ENCODE measurements at regions of chr6 and their contacts with region 1.

Region 1: DNA sequence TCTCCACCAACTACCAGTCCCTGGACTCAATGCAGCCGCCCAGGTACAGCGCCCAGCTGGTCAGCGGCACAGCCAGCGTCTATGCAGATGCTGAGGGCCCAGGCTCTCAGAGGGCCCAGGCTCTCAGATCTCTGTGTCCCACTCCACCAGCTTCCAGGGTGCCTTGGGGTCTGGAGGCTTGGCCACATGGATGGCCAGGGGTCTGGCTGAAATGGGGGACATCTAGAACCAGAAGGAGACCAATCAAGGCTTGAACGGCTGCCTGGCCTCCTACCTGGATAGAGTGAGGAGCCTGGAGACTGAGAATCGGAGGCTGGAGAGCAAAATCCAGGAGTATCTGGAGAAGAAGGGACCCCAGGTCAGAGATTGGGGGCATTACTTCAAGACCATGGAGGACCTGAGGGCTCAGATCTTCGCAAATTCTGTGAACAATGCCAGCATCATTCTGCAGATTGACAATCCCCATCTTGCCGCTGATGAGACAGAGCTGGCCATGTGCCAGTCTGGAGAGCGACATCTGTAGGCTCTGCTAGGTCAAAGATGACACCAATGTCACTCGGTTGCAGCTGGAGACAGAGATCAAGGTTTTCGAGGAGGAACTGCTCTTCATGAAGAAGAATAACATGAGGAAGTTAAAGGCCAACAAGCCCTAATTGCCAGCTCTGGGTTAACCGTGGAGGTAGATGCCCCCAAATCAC is 44.1 kb upstream of the GRM4 start:
- DNase-seq: peak in 2 of 5 donors; percentile 5 to 49
- H3K4me3 ChIP-seq: no peak overlapping the region
- H3K4me3 Mint-ChIP-seq: no peak overlapping the region
- H3K27ac ChIP-seq: no peak overlapping the region
- H3K27ac Mint-ChIP-seq: no peak overlapping the region
- H3K4me1 ChIP-seq: peaks cover 9% of the 10 kb centered on the region
- H3K4me1 Mint-ChIP-seq: peaks cover 0 to 4% (median 0%) of the 10 kb centered on the region in 3 donors
- H3K27me3 ChIP-seq: no peaks in the 10 kb centered on the region
- H3K27me3 Mint-ChIP-seq: no peaks in the 10 kb centered on the region

Region 2: DNA sequence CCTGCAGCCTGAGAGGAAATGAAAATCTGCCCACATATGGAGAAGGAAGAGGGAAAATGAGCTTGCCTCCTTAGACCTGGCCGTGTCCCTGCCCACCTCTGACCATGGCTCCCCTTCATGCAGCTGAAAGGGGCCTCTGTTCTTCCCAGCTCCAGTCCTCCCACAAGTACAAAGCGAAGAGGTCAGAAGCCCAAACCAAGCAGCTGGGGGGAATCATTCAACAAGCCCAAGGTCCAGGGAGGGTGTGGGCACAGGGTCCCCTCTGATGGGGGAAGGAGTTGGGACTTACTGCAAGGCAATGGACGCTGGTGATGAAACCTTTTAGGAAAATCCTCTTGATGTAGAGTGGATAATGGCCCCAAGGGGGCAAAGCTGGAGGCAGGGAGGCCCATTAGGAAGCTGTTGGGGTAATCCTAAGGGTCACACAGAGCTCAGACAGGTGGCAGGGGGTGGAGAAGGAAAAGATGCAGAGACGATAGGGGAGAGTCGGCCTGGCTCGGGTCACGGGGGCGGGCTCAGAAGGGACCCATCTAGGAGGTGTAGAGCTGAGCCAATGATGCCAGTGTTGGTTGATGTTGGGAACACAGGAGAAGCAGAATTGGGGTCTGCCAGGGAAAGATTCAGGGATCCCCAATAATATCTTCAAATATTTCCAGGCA is 28.0 kb before region 1 on chr6:
- CTCF ChIA-PET with region 1: interaction called, 22 read pairs
- POLR2A ChIA-PET with region 1: no interaction called
- DNase-seq: no peak
- H3K4me3 ChIP-seq: no peak overlapping the region
- H3K4me3 Mint-ChIP-seq: no peak overlapping the region
- H3K27ac ChIP-seq: no peak overlapping the region
- H3K27ac Mint-ChIP-seq: no peak overlapping the region
- H3K4me1 ChIP-seq: no peaks in the 10 kb centered on the region
- H3K4me1 Mint-ChIP-seq: no peaks in the 10 kb centered on the region
- H3K27me3 ChIP-seq: no peaks in the 10 kb centered on the region
- H3K27me3 Mint-ChIP-seq: peaks cover 5 to 12% of the 10 kb centered on the region in 2 donors

Measured in CD8-positive, alpha-beta memory T cell (primary cell).